ENCODE measurements at regions of chr3 and their contacts with region 1.

Region 1: DNA sequence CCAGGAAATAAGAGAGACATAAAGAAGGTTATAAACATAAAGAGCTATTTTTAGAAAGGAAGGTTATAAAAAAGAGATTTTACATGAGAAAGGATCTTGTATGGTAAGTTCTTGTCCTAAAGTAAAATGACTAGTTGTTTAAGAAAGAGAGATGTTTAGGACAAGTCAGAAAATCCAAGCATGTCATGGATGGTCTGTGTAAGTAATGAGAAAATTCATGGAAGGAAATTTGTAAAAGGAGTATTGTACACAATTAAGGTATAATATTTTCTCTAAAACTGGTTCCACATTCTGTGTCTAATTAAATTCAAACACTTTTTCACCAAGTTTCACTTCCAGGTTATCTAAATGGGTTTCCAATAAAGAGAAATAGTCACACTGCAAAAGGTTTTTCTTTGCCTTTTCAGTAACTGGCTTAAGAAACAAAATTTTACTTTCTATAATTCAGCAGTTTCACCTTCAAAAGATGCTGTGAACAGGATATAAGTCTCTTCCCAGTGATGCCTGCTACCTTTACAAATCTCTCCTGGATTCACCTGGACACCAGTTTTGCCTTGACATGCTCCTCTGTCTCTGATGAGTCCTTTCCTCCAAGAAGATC is 455.7 kb downstream of the ZIC1 start:
- DNase-seq: no peak
- ATAC-seq: no peak
- H3K4me3 ChIP-seq: no peak overlapping the region
- H3K27ac ChIP-seq: no peak overlapping the region
- H3K4me1 ChIP-seq: no peaks in the 10 kb centered on the region
- H3K27me3 ChIP-seq: no peaks in the 10 kb centered on the region
- CTCF ChIP-seq: no peak

Region 2: DNA sequence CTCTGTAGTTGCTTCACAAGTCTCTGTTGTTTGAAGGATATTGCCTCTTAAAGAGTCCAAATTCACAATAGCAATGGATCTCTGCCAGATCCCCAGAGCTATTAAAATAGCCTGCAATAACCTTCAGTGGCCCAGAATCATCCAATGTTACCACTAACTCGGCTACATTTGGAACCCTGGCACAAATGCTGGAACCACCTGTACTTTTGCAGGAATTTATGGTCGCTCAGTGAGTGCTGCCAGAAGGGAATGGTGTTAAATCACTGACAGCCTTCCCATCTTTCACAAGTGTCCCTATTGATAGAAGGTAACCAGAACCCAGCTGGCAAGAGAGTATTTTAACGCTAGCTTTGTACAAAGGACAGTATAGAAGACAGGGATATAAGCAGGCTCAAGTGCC is 960.9 kb before region 1 on chr3:
- intact Hi-C with region 1: loop called in 1 of 2 experiments (anchors 2 kb)
- DNase-seq: no peak
- ATAC-seq: peak; percentile 67 to 98 (median 85)
- H3K4me3 ChIP-seq: no peak overlapping the region
- H3K27ac ChIP-seq: no peak overlapping the region
- H3K4me1 ChIP-seq: peaks cover 4% of the 10 kb centered on the region
- H3K27me3 ChIP-seq: no peaks in the 10 kb centered on the region
- CTCF ChIP-seq: no peak

Region 3: GRCh38 chr3:147554332-147554731 is 310.5 kb before region 1 on chr3:
- intact Hi-C with region 1: no loop called
- DNase-seq: no peak
- ATAC-seq: no peak
- H3K4me3 ChIP-seq: no peak overlapping the region
- H3K27ac ChIP-seq: no peak overlapping the region
- H3K4me1 ChIP-seq: no peaks in the 10 kb centered on the region
- H3K27me3 ChIP-seq: no peaks in the 10 kb centered on the region
- CTCF ChIP-seq: no peak

Region 4: DNA sequence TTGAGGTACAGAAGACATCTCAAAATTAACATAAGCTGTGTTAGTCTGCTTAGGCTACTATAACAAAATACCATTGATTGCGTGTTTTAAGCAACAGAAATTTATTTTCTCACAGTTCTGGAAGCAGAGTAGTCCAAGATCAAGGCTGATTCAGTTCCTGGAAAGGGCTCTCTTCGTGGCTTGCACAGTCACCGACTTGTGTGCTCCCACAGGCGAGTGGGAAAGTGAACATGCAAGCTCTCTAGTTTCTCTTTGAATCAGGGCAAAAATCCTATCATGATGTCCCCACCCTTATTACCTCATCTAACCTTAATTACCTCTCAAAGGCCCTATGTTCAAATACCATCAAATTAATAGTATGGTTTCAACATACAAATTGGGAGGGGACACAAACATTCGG is 50.2 kb after region 1 on chr3:
- intact Hi-C with region 1: no loop called
- DNase-seq: no peak
- ATAC-seq: no peak
- H3K4me3 ChIP-seq: no peak overlapping the region
- H3K27ac ChIP-seq: no peak overlapping the region
- H3K4me1 ChIP-seq: no peaks in the 10 kb centered on the region
- H3K27me3 ChIP-seq: no peaks in the 10 kb centered on the region
- CTCF ChIP-seq: no peak

Measured in psoas muscle (tissue), 8 donors.